ENCODE measurements at regions of chr7 and their contacts with region 1.

Region 1: DNA sequence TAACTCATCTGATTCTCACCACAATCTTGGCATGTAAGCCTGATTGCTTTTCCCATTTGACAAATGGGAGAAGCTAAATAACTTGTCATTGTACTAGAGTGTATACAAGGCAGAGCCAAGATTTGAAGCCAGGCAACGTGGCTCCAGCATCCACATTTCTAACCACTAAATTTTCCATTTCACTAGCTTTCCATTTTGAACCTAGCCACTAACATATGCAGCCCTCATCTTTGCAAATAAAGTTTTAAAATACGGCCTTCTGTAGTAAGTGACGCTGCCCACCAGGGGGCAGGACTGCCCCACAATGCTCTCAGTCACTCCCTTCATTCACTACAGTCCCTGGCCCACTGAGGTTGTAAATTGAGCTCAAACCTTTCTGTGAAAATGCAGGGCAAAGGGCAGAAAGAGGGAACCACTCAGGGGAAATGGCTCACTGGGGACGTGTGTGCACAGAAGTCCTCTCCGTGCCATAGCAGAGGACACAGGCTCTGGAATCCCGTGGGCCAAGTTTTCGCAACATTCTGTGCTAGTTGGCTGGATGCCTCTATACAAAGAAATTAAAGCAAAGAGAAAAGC is 315.7 kb downstream of the TNS3 start:
- DNase-seq: peak; percentile 30
- H3K4me3 Mint-ChIP-seq: no peak overlapping the region
- H3K27ac Mint-ChIP-seq: no peak overlapping the region
- H3K4me1 Mint-ChIP-seq: no peaks in the 10 kb centered on the region
- H3K27me3 Mint-ChIP-seq: no peaks in the 10 kb centered on the region

Region 2: GRCh38 chr7:47254081-47255006 is 11.9 kb before region 1 on chr7:
- CTCF ChIA-PET with region 1: interaction called, 10 read pairs
- POLR2A ChIA-PET with region 1: no interaction called
- DNase-seq: peak; percentile 41
- H3K4me3 Mint-ChIP-seq: no peak overlapping the region
- H3K27ac Mint-ChIP-seq: no peak overlapping the region
- H3K4me1 Mint-ChIP-seq: peaks cover 2% of the 10 kb centered on the region
- H3K27me3 Mint-ChIP-seq: peaks cover 11% of the 10 kb centered on the region

Region 3: GRCh38 chr7:47818796-47819606 is 552.8 kb after region 1 on chr7:
- CTCF ChIA-PET with region 1: interaction called, 20 read pairs
- POLR2A ChIA-PET with region 1: no interaction called
- DNase-seq: peak; percentile 45
- H3K4me3 Mint-ChIP-seq: no peak overlapping the region
- H3K27ac Mint-ChIP-seq: no peak overlapping the region
- H3K4me1 Mint-ChIP-seq: no peaks in the 10 kb centered on the region
- H3K27me3 Mint-ChIP-seq: peaks cover 4% of the 10 kb centered on the region

Measured in activated CD4-positive, alpha-beta memory T cell treated with anti-CD3 and anti-CD28 coated beads, Interleukin-2, amount 10 ng/mL, durations not matched to agents 7 days and 5 days (primary cell).